Thyroid gland (tissue), 4 donors: ENCODE measurements at regions of chr9 and their contacts with region 1.

Region 1: GRCh38 chr9:135961277-135961705 is at the start of gene UBAC1:
- DNase-seq: peak; percentile 95 to 96
- H3K4me3 ChIP-seq: peak within 1 kb of the TSS; percentile 58 to 82 (median 82)
- H3K27ac ChIP-seq: peak within 1 kb of the TSS; percentile 39 to 77 (median 69)
- H3K4me1 ChIP-seq: peaks cover 8 to 10% of the 10 kb centered on the region in 2 donors
- H3K27me3 ChIP-seq: no peaks in the 10 kb centered on the region
- CTCF ChIP-seq: peak in 4 of 6 experiments; percentile 24 to 65 (median 57)
- POLR2A ChIP-seq: no peak
- total RNA-seq, gene UBAC1: 37.9 to 56.2 (median 44.2) TPM

Region 2: GRCh38 chr9:135864447-135865049 is 96.7 kb before region 1 on chr9:
- intact Hi-C with region 1: no loop called
- DNase-seq: peak; percentile 62 to 68
- H3K4me3 ChIP-seq: no peak overlapping the region
- H3K27ac ChIP-seq: no peak overlapping the region
- H3K4me1 ChIP-seq: no peaks in the 10 kb centered on the region
- H3K27me3 ChIP-seq: no peaks in the 10 kb centered on the region
- CTCF ChIP-seq: peak; percentile 34 to 87 (median 63)
- POLR2A ChIP-seq: no peak

Region 3: DNA sequence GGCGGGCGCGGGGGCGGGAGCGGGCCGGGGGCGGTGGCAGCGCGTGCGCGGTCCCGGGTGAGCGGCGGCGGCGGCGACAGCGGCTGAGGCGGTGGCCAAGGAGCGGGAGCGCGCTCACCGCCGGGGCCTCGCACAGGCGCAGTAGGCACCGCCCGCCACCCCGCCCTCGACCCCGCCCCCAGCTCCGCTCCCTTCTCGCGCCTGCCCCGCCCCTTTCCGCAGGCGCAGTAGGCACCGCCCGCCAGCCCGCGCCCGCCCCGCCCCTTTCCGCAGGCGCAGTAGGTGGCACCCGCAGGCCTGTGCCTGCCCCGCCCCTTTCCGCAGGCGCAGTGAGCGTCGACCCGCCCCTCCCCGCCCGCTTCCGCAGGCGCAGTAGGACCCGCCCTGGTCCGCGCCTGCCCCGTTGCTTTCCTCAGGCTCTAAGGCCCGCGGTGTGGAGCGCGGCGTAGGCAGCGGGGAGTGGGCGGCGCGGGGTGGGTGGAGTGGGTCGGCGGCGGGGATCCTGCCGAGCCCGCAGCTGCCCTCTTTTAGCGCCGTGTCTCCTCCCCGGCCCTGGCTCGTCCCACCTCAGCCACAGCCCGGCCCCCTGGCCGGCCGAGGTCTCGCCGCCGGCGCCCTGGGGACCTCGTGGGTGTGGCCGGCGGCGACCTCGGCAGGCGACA is 53.7 kb before region 1 on chr9 and contains the start of gene CAMSAP1:
- intact Hi-C with region 1: loop called (anchors 5 kb)
- DNase-seq: peak; percentile 88 to 92
- H3K4me3 ChIP-seq: peak within 1 kb of the TSS; percentile 58 to 82 (median 69)
- H3K27ac ChIP-seq: peak within 1 kb of the TSS in 1 of 3 donors; percentile 67
- H3K4me1 ChIP-seq: peaks cover 18 to 30% of the 10 kb centered on the region in 2 donors
- H3K27me3 ChIP-seq: no peaks in the 10 kb centered on the region
- CTCF ChIP-seq: no peak
- POLR2A ChIP-seq: peak in 1 of 2 donors; percentile 56
- total RNA-seq, gene CAMSAP1: 11.8 to 23.4 (median 19.9) TPM

Region 4: GRCh38 chr9:136245219-136246150 is 284.2 kb after region 1 on chr9 and contains the start of gene QSOX2:
- intact Hi-C with region 1: loop called (anchors 10 kb)
- DNase-seq: peak; percentile 73 to 79
- H3K4me3 ChIP-seq: peak within 1 kb of the TSS; percentile 9 to 66 (median 49)
- H3K27ac ChIP-seq: no peak within 1 kb of the TSS
- H3K4me1 ChIP-seq: peaks cover 28 to 47% of the 10 kb centered on the region in 2 donors
- H3K27me3 ChIP-seq: no peaks in the 10 kb centered on the region
- CTCF ChIP-seq: no peak
- POLR2A ChIP-seq: peak; percentile 40 to 47
- total RNA-seq, gene QSOX2: 8.9 to 19.1 (median 11.2) TPM